Caco-2 (cell line): ENCODE measurements at regions of chr7 and their contacts with region 1.

Region 1: GRCh38 chr7:74289018-74289658 is at the start of gene CLIP2:
- DNase-seq: peak; percentile 80 to 84
- H3K4me3 ChIP-seq: peak within 1 kb of the TSS; percentile 76
- H3K4me3 Mint-ChIP-seq: peak within 1 kb of the TSS; percentile 71
- H3K27ac Mint-ChIP-seq: peak within 1 kb of the TSS; percentile 38
- H3K4me1 ChIP-seq: peaks cover 56% of the 10 kb centered on the region
- H3K4me1 Mint-ChIP-seq: peaks cover 23% of the 10 kb centered on the region
- H3K27me3 ChIP-seq: no peaks in the 10 kb centered on the region
- H3K27me3 Mint-ChIP-seq: no peaks in the 10 kb centered on the region
- CTCF ChIP-seq: no peak
- total RNA-seq, gene CLIP2: 19.5 and 23.5 TPM in 2 replicates

Region 2: GRCh38 chr7:74269757-74270277 is 19.3 kb before region 1 on chr7:
- CTCF ChIA-PET with region 1: interaction called, 11 read pairs
- POLR2A ChIA-PET with region 1: no interaction called
- intact Hi-C with region 1: loop called (anchors 1 kb)
- DNase-seq: peak; percentile 83 to 85
- H3K4me3 ChIP-seq: peak overlapping the region; percentile 58
- H3K4me3 Mint-ChIP-seq: peak overlapping the region; percentile 76
- H3K27ac Mint-ChIP-seq: no peak overlapping the region
- H3K4me1 ChIP-seq: peaks cover 6% of the 10 kb centered on the region
- H3K4me1 Mint-ChIP-seq: no peaks in the 10 kb centered on the region
- H3K27me3 ChIP-seq: no peaks in the 10 kb centered on the region
- H3K27me3 Mint-ChIP-seq: no peaks in the 10 kb centered on the region
- CTCF ChIP-seq: no peak

Region 3: GRCh38 chr7:74275401-74275881 is 13.7 kb before region 1 on chr7:
- CTCF ChIA-PET with region 1: interaction called, 11 read pairs
- POLR2A ChIA-PET with region 1: interaction called, 4 read pairs
- intact Hi-C with region 1: loop called (anchors 1 kb)
- DNase-seq: peak in 1 of 2 experiments; percentile 54
- H3K4me3 ChIP-seq: no peak overlapping the region
- H3K4me3 Mint-ChIP-seq: no peak overlapping the region
- H3K27ac Mint-ChIP-seq: no peak overlapping the region
- H3K4me1 ChIP-seq: peaks cover 32% of the 10 kb centered on the region
- H3K4me1 Mint-ChIP-seq: peaks cover 13% of the 10 kb centered on the region
- H3K27me3 ChIP-seq: no peaks in the 10 kb centered on the region
- H3K27me3 Mint-ChIP-seq: no peaks in the 10 kb centered on the region
- CTCF ChIP-seq: peak; percentile 47 to 74

Region 4: DNA sequence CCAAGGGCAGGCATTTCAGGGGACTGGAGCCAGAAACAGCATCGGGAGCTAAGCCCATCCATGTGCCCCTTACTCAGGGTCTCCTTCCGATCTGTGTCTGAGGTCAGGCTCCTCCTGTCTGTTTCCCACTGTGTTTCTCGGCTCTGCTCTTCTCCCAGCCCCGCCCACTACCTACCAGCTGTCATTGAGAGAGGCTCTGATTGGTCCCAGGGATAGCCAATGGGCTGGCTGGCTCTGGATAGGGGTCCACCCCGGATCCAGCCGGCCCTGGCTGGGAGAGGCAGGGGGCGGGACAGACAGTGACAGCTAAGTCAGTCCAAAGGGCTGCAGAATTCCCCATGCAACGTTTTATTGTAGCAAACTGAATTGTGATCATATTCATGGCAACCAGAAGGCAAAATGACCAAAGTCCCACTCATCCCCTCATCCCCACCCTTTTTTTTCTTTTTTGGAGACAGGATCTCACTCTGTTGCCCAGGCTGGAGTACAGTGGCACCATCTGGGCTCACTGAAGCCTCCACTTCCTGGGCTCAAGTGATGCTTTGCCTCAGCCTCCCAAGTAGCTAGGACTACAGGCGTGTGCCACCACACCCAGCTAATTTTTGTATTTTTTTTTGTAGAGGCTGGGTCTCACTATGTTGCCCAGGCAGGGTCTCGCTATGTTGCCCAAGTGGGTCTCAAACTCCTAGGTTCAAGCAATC is 76.3 kb after region 1 on chr7:
- CTCF ChIA-PET with region 1: no interaction called
- POLR2A ChIA-PET with region 1: no interaction called
- intact Hi-C with region 1: loop called (anchors 5 kb)
- DNase-seq: peak; percentile 89 to 91
- H3K4me3 ChIP-seq: no peak overlapping the region
- H3K4me3 Mint-ChIP-seq: no peak overlapping the region
- H3K27ac Mint-ChIP-seq: peak overlapping the region; percentile 58
- H3K4me1 ChIP-seq: no peaks in the 10 kb centered on the region
- H3K4me1 Mint-ChIP-seq: no peaks in the 10 kb centered on the region
- H3K27me3 ChIP-seq: no peaks in the 10 kb centered on the region
- H3K27me3 Mint-ChIP-seq: no peaks in the 10 kb centered on the region
- CTCF ChIP-seq: no peak